Activated CD4-positive, alpha-beta memory T cell treated with anti-CD3 and anti-CD28 coated beads for 36 hours (primary cell): ENCODE measurements at regions of chr6 and their contacts with region 1.

Region 1: GRCh38 chr6:45377554-45378333 is at the start of gene SUPT3H:
- DNase-seq: peak; percentile 96
- H3K4me3 Mint-ChIP-seq: peak within 1 kb of the TSS; percentile 94
- H3K27ac Mint-ChIP-seq: peak within 1 kb of the TSS; percentile 97
- H3K4me1 Mint-ChIP-seq: peaks cover 27% of the 10 kb centered on the region
- H3K27me3 Mint-ChIP-seq: no peaks in the 10 kb centered on the region
- total RNA-seq, gene SUPT3H: 17.4 to 18.2 TPM

Region 2: GRCh38 chr6:44387346-44388133 is 990.2 kb before region 1 on chr6 and contains the start of gene CDC5L:
- CTCF ChIA-PET with region 1: no interaction called
- POLR2A ChIA-PET with region 1: no interaction called
- intact Hi-C with region 1: loop called (anchors 10 kb)
- DNase-seq: peak; percentile 95
- H3K4me3 Mint-ChIP-seq: peak within 1 kb of the TSS; percentile 89
- H3K27ac Mint-ChIP-seq: peak within 1 kb of the TSS; percentile 94
- H3K4me1 Mint-ChIP-seq: peaks cover 31% of the 10 kb centered on the region
- H3K27me3 Mint-ChIP-seq: no peaks in the 10 kb centered on the region
- total RNA-seq, gene CDC5L: 24.0 to 24.3 TPM

Region 3: GRCh38 chr6:44932651-44933091 is 445.1 kb before region 1 on chr6:
- CTCF ChIA-PET with region 1: no interaction called
- POLR2A ChIA-PET with region 1: no interaction called
- intact Hi-C with region 1: loop called (anchors 5 kb)
- DNase-seq: peak; percentile 43
- H3K4me3 Mint-ChIP-seq: peak overlapping the region; percentile 80
- H3K27ac Mint-ChIP-seq: peak overlapping the region; percentile 88
- H3K4me1 Mint-ChIP-seq: peaks cover 41% of the 10 kb centered on the region
- H3K27me3 Mint-ChIP-seq: no peaks in the 10 kb centered on the region

Region 4: DNA sequence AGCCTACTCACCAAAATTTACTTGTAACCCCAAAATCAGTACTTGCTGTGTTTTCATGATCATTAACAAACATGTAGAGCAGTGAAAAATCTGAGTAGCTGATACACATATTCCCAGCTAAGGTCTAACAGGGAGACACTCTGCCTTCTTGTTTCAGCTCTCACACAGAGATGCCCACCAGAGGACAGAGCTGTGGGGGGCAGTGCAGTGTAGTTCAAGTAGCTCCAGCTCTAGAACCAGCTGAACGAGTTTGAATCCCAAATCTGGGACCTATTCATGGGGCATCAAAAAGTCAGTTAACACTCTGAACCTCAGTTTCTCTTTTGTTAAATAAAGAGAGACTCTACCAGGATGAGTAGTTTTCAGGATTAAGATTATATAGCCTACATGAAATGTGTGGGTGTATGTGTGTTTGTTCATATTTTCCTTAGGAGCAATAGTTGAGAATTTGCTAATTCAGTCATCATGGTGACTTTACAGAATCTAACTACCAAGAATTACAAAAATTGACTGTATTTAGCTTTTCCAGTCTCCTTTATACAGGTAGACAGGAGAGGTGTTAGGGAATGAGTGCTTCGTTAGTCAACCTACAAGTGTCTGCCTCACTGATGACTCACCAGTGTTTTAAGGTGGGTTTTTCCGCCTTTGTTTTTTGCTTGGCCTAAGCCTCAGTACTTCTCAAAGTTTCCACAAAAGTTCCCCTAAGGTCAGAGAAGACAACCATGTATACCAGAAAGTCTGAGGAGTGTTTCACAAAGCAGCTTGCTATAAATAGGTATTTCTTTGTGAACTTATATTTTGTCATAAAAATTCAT is 213.6 kb before region 1 on chr6:
- CTCF ChIA-PET with region 1: interaction called, 3 read pairs
- POLR2A ChIA-PET with region 1: interaction called, 4 read pairs
- intact Hi-C with region 1: loop called (anchors 2 kb)
- DNase-seq: peak; percentile 60
- H3K4me3 Mint-ChIP-seq: peak overlapping the region; percentile 46
- H3K27ac Mint-ChIP-seq: peak overlapping the region; percentile 74
- H3K4me1 Mint-ChIP-seq: peaks cover 42% of the 10 kb centered on the region
- H3K27me3 Mint-ChIP-seq: no peaks in the 10 kb centered on the region

Region 5: GRCh38 chr6:45365036-45365435 is 12.7 kb before region 1 on chr6:
- CTCF ChIA-PET with region 1: no interaction called
- POLR2A ChIA-PET with region 1: no interaction called
- intact Hi-C with region 1: no loop called
- DNase-seq: no peak
- H3K4me3 Mint-ChIP-seq: no peak overlapping the region
- H3K27ac Mint-ChIP-seq: no peak overlapping the region
- H3K4me1 Mint-ChIP-seq: peaks cover 5% of the 10 kb centered on the region
- H3K27me3 Mint-ChIP-seq: no peaks in the 10 kb centered on the region

Region 6: DNA sequence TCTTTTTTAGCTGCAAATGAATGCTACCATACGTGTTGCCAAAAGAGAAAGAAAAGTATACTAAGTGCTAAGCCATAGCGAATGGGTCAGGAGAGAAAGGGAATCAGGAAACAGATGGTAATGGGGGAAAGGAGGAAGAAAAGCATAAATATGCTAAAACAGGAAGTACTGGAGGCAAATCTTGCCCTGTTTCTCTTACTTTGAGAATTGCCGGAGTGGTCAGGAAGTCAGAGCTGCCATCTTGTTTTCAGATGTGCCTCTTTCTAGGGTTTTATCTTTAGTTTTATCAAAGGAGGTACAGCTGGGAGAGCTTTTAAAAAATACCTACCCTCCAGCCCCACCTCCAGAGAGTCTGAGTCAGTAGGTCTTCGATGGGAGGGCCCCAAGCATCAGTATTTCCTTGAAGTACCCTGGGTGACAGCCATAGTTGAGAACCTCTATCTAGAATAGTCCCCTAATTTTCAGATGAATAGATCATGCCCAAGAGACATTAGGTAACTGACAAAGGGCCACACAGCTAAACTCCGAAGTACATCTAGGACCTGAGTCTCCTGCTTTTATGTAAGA is 444.6 kb after region 1 on chr6:
- CTCF ChIA-PET with region 1: no interaction called
- POLR2A ChIA-PET with region 1: interaction called, 3 read pairs
- intact Hi-C with region 1: loop called (anchors 5 kb)
- DNase-seq: peak; percentile 67
- H3K4me3 Mint-ChIP-seq: peak overlapping the region; percentile 47
- H3K27ac Mint-ChIP-seq: peak overlapping the region; percentile 89
- H3K4me1 Mint-ChIP-seq: peaks cover 50% of the 10 kb centered on the region
- H3K27me3 Mint-ChIP-seq: peaks cover 3% of the 10 kb centered on the region